CD8-positive, alpha-beta T cell (primary cell): ENCODE measurements at regions of chr10 and their contacts with region 1.

Region 1: GRCh38 chr10:102420810-102421644 is at the start of gene FBXL15:
- DNase-seq: peak; percentile 86 to 98 (median 95)
- ATAC-seq: peak; percentile 70
- H3K4me3 ChIP-seq: peak within 1 kb of the TSS; percentile 75 to 81
- H3K4me3 Mint-ChIP-seq: peak within 1 kb of the TSS; percentile 95
- H3K27ac ChIP-seq: peak within 1 kb of the TSS; percentile 79 to 82
- H3K27ac Mint-ChIP-seq: peak within 1 kb of the TSS; percentile 91
- H3K4me1 ChIP-seq: peaks cover 36% of the 10 kb centered on the region
- H3K4me1 Mint-ChIP-seq: peaks cover 39% of the 10 kb centered on the region
- H3K27me3 ChIP-seq: peaks cover 6 to 17% of the 10 kb centered on the region in 2 experiments
- H3K27me3 Mint-ChIP-seq: peaks cover 15% of the 10 kb centered on the region
- CTCF ChIP-seq: no peak
- total RNA-seq, gene FBXL15: 7.0 to 7.9 TPM

Region 2: DNA sequence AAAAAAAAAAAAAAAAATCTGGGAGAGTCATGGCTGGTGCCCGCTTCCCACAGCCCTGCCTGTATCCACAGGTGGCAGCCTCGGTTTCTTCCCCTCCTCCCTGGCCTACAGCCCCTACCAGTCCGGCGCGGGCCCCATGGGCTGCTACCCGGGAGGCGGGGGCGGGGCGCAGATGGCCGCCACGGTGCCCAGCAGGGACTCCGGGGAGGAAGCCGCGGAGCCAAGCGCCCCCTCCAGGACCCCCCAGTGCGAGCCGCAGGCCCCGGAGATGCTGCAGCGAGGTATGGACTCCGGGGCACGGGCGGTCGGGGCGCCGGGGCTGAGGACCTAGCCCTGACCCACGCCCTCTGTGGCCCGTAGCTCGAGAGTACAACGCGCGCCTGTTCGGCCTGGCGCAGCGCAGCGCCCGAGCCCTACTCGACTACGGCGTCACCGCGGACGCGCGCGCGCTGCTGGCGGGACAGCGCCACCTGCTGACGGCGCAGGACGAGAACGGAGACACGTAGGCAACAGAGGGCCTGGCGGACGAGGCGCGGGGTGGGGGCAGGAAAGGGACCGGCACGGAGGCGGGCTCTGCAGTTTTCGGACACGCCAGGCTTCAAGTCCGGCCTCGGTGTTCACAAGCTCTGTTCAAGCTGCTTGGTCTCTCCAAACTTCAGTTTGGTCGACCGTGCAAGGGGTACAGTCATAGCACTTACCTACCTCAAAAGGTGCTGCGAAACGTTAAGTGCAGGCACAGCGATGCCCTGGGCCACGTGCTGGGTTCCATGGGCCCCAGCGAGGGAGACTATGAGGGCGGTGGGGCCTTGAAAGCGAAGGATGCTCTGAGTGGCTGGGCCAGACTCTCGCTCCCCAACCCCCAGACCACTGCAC is 21.6 kb before region 1 on chr10:
- CTCF ChIA-PET with region 1: interaction called, 45 read pairs
- POLR2A ChIA-PET with region 1: interaction called, 17 read pairs
- intact Hi-C with region 1: loop called (anchors 1 kb)
- DNase-seq: peak; percentile 78 to 95 (median 87)
- ATAC-seq: peak; percentile 51
- H3K4me3 ChIP-seq: peak overlapping the region; percentile 44 to 65
- H3K4me3 Mint-ChIP-seq: peak overlapping the region; percentile 76
- H3K27ac ChIP-seq: peak overlapping the region; percentile 59 to 86
- H3K27ac Mint-ChIP-seq: peak overlapping the region; percentile 81
- H3K4me1 ChIP-seq: peaks cover 30% of the 10 kb centered on the region
- H3K4me1 Mint-ChIP-seq: peaks cover 38% of the 10 kb centered on the region
- H3K27me3 ChIP-seq: no peaks in the 10 kb centered on the region
- H3K27me3 Mint-ChIP-seq: no peaks in the 10 kb centered on the region
- CTCF ChIP-seq: peak; percentile 89

Region 3: DNA sequence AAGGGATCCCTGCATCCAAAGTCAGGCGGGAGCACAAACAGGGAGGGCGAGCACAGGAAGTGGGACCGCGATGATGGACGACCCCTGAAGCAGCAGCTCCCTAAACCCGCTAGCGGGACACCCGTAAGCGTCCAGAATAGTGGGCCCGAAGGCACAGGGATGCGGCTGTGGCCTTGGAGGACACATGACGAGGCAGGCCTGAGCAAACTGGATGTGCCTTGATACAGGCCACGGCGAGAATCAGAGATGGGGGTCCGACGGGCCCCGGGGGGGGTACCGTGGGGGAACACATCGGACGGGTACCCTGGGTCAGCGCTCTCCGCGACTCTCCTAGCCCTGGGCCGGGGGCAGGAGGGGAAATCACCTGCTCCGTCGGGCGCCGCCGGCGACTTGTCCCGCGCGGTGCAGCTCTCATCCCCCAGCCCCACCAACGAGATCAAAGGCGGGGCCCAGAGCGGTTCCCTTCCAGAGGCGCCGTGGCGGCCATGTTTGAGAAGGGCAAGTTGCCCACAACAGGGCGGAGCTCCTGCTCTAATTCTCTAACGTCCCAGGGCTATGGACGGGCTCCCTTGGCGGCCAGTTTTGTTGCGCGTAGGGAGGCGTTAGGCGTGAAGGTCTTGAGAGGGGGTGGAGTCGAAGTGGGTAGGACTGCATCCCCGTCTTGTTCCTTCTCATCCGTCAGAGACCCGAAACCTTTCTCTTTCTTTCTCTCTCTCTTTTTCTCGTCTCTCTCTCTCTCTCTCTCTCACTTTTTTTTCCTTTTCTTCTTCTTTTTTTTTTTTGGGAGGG is 11.3 kb after region 1 on chr10 and contains the start of gene CUEDC2:
- CTCF ChIA-PET with region 1: interaction called, 45 read pairs
- POLR2A ChIA-PET with region 1: interaction called, 44 read pairs
- intact Hi-C with region 1: loop called (anchors 1 kb)
- DNase-seq: peak; percentile 88 to 98 (median 93)
- ATAC-seq: peak; percentile 93
- H3K4me3 ChIP-seq: peak within 1 kb of the TSS; percentile 76 to 96
- H3K4me3 Mint-ChIP-seq: peak within 1 kb of the TSS; percentile 95
- H3K27ac ChIP-seq: peak within 1 kb of the TSS; percentile 62 to 67
- H3K27ac Mint-ChIP-seq: peak within 1 kb of the TSS; percentile 89
- H3K4me1 ChIP-seq: peaks cover 48% of the 10 kb centered on the region
- H3K4me1 Mint-ChIP-seq: peaks cover 49% of the 10 kb centered on the region
- H3K27me3 ChIP-seq: no peaks in the 10 kb centered on the region
- H3K27me3 Mint-ChIP-seq: no peaks in the 10 kb centered on the region
- CTCF ChIP-seq: no peak
- total RNA-seq, gene CUEDC2: 24.2 to 27.0 TPM

Region 4: GRCh38 chr10:102461187-102462054 is 40.4 kb after region 1 on chr10:
- CTCF ChIA-PET with region 1: interaction called, 4 read pairs
- POLR2A ChIA-PET with region 1: interaction called, 25 read pairs
- intact Hi-C with region 1: loop called (anchors 1 to 2 kb)
- DNase-seq: peak; percentile 85 to 96 (median 93)
- ATAC-seq: peak; percentile 99
- H3K4me3 ChIP-seq: peak overlapping the region; percentile 67 to 76
- H3K4me3 Mint-ChIP-seq: peak overlapping the region; percentile 89
- H3K27ac ChIP-seq: peak overlapping the region in 1 of 2 experiments; percentile 59
- H3K27ac Mint-ChIP-seq: peak overlapping the region; percentile 79
- H3K4me1 ChIP-seq: peaks cover 20% of the 10 kb centered on the region
- H3K4me1 Mint-ChIP-seq: peaks cover 35% of the 10 kb centered on the region
- H3K27me3 ChIP-seq: no peaks in the 10 kb centered on the region
- H3K27me3 Mint-ChIP-seq: no peaks in the 10 kb centered on the region
- CTCF ChIP-seq: no peak